Transverse colon (tissue), 4 donors: ENCODE measurements at regions of chr2 and their contacts with region 1.

Region 1: GRCh38 chr2:130342533-130343275 is at the start of gene IMP4:
- DNase-seq: peak; percentile 97
- H3K4me3 ChIP-seq: peak within 1 kb of the TSS; percentile 43 to 88 (median 64)
- H3K27ac ChIP-seq: peak within 1 kb of the TSS; percentile 89 to 93 (median 92)
- H3K4me1 ChIP-seq: peaks cover 14 to 22% (median 19%) of the 10 kb centered on the region in 4 donors
- H3K27me3 ChIP-seq: no peaks in the 10 kb centered on the region
- CTCF ChIP-seq: peak; percentile 26 to 56 (median 40)
- EP300 ChIP-seq: no peak
- POLR2A ChIP-seq: no peak
- total RNA-seq, gene IMP4: 52.1 to 367 (median 83.7) TPM

Region 2: GRCh38 chr2:129936334-129936934 is 406.3 kb before region 1 on chr2:
- in situ Hi-C with region 1: loop called in 2 of 4 experiments (anchors 10 to 25 kb)
- intact Hi-C with region 1: loop called (anchors 10 kb)
- DNase-seq: peak; percentile 52
- H3K4me3 ChIP-seq: no peak overlapping the region
- H3K27ac ChIP-seq: no peak overlapping the region
- H3K4me1 ChIP-seq: no peaks in the 10 kb centered on the region
- H3K27me3 ChIP-seq: peaks cover 31% of the 10 kb centered on the region
- CTCF ChIP-seq: peak in 3 of 5 experiments; percentile 34 to 44 (median 39)
- EP300 ChIP-seq: no peak
- POLR2A ChIP-seq: no peak

Region 3: DNA sequence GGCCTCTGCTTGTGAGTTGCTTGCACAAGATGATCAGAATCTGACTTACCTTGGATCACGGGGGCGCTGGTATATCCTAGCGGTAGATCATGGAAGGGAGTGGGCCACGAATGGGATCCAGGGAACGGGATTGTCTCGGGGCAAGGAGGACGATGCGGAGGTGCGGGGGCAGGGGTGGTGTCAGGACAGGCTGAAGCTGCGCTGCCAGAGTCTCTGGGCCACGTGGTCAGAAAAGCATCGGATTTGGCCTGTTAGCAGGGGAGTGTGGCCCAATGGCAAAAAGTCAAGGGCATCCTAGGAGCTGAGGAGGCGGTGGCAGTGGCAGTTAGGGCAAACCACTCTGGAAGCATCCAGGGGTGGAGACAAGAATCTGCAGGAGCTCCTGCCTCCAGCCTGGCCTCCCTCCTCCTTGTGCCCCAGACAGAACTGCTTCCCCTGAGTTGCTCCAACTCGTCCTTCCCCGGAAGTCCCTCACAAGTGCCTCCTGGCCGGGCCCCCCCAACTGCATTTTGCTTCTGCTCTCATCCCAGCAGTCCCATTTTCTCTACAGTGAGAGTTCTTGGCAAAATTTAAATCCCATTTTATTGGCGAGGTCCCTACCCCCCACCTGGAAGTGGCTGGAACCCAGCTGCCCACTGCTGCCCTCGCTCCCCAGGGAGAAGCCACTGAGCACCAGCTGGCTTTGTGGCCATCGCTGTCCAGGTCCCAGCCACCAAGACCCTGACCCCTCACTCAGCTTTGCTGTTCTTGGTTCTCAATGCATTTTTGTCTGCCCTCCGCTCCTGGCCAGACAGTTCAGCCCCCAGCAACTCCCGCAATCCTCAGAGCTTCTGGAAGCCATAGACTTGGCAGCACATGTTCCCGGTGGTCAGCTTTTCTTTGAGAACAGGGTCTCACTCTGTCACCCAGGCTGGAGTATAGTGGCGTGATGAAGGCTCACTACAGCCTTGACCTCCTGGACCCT is 192.2 kb before region 1 on chr2:
- in situ Hi-C with region 1: loop called in 2 of 4 experiments (anchors 25 kb)
- intact Hi-C with region 1: no loop called
- DNase-seq: no peak
- H3K4me3 ChIP-seq: no peak overlapping the region
- H3K27ac ChIP-seq: no peak overlapping the region
- H3K4me1 ChIP-seq: peaks cover 0 to under 1% (median under 1%) of the 10 kb centered on the region in 4 donors
- H3K27me3 ChIP-seq: peaks cover 9% of the 10 kb centered on the region
- CTCF ChIP-seq: no peak
- EP300 ChIP-seq: no peak
- POLR2A ChIP-seq: no peak

Region 4: DNA sequence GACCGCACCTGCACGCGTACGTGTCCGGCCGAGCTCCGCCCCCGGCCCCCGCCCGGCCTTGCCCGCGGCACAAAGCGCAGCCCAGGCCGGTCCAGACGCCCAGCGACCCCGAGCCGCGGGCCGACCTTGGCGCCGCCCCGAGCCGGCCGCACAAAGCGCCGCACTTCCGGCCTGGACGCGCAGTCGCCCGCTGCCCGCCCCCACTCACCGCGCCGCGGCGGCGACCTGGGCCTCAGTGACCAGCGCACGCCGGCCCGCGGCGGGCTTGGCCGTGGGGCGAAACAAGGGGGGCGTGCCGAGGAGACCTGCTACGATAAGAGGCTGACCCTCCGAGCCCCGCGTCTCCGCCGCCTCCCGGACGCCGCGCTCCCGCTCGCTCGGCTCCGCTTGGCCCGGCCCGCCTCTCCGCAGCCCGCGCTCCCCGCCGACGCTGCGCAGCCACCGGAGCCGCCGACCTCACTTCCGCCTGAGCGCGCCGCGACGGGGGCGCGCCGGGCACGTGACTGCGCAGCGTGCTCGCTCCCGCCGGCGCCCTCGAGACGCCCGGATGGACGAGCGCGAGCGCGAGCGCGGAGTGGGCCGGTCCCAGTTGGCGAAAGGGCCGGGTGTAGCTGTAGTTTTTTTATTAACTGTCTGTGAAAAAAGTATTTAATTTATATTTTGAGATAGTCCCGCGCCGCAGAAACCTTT is 750.4 kb after region 1 on chr2 and contains the start of gene FAM168B:
- in situ Hi-C with region 1: loop called in 1 of 4 experiments (anchors 25 kb)
- intact Hi-C with region 1: no loop called
- DNase-seq: peak; percentile 91
- H3K4me3 ChIP-seq: peak within 1 kb of the TSS; percentile 71 to 93 (median 86)
- H3K27ac ChIP-seq: peak within 1 kb of the TSS; percentile 96 to 98 (median 97)
- H3K4me1 ChIP-seq: peaks cover 11 to 23% (median 18%) of the 10 kb centered on the region in 4 donors
- H3K27me3 ChIP-seq: no peaks in the 10 kb centered on the region
- CTCF ChIP-seq: no peak
- EP300 ChIP-seq: no peak
- POLR2A ChIP-seq: peak; percentile 82
- total RNA-seq, gene FAM168B: 31.6 to 124 (median 110) TPM